ENCODE measurements at regions of chr20 and their contacts with region 1.

Region 1: DNA sequence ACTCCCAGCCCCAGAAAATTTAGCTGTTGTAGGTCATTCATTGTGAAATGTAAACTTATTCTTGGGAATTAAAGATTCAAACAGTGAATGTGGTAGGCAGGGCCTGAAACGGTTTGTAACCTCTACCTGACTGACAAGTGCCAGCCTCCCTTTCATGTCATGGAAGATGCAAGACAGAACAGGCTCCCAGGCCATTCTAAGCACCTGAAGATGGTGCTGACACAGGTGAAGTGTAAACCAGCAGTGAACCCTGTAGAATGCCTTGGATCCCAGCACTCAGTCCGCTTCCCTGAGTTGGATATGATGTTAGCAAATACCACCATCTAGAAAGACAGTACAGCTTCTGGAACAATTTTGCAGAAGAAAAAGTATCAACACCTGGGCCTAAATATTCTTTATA is 19.3 kb downstream of the CYP24A1 start:
- DNase-seq: no peak
- H3K4me3 Mint-ChIP-seq: no peak overlapping the region
- H3K27ac Mint-ChIP-seq: no peak overlapping the region
- H3K4me1 Mint-ChIP-seq: no peaks in the 10 kb centered on the region
- H3K27me3 Mint-ChIP-seq: no peaks in the 10 kb centered on the region
- CTCF ChIP-seq: no peak

Region 2: DNA sequence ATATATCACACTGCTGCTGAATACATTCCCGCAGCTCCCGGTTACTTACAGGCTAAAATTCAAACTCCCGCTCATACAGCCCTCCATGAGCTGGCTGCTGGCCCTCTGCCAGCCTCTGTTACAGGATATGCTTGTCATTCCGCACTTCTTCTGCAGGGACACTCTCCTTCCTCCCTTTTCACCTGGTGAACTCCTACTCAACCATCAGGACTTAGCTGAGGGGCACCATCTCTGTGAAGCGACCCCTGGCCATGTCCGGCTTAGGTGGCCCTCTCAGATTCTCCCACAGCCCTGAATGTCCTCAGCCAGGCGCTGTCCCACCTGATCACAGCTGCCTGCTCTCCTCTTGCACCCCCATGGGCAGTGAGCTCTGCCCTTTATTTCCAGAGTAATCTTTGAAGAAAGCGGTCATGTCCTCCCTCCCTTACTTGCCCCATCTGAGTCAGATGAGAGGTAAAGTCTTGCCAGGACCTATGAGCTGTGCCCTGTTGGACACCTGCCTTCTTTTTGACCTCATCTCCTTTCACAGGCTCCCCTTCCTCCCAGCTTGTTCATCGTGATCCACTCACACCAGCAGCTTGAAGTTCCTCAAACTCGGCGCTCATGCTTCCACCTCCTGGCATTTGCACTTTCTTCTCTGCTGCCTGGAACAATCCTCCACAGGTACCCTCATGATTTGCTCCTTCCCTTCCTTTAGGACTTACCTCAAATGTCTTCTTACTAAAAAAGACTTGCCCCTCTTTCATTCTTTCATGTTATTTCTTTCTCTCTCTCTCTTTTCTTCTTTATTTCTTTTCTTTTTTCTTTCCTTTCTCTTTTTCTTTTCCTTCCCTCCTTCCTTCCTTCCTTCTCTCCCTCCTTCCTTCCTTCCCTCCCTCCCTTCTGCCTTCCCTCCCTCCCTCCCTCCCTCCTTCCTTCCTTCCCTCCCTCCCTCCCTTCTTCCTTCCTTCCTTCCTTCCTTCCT is 13.8 kb after region 1 on chr20:
- CTCF ChIA-PET with region 1: interaction called, 10 read pairs
- POLR2A ChIA-PET with region 1: interaction called, 9 read pairs
- intact Hi-C with region 1: no loop called
- DNase-seq: peak; percentile 86
- H3K4me3 Mint-ChIP-seq: peak overlapping the region; percentile 28
- H3K27ac Mint-ChIP-seq: peak overlapping the region; percentile 50
- H3K4me1 Mint-ChIP-seq: peaks cover 18% of the 10 kb centered on the region
- H3K27me3 Mint-ChIP-seq: no peaks in the 10 kb centered on the region
- CTCF ChIP-seq: no peak

Measured in MCF 10A (cell line).